Activated CD4-positive, alpha-beta memory T cell treated with anti-CD3 and anti-CD28 coated beads, Interleukin-2, amount 10 ng/mL, durations not matched to agents 7 days and 5 days (primary cell): ENCODE measurements at regions of chr2 and their contacts with region 1.

Region 1: GRCh38 chr2:149587220-149587949 is at the start of gene MMADHC:
- DNase-seq: peak; percentile 95
- H3K4me3 Mint-ChIP-seq: peak within 1 kb of the TSS; percentile 82
- H3K27ac Mint-ChIP-seq: peak within 1 kb of the TSS; percentile 98
- H3K4me1 Mint-ChIP-seq: peaks cover 41% of the 10 kb centered on the region
- H3K27me3 Mint-ChIP-seq: peaks cover 10% of the 10 kb centered on the region
- total RNA-seq, gene MMADHC: 112 to 113 TPM

Region 2: DNA sequence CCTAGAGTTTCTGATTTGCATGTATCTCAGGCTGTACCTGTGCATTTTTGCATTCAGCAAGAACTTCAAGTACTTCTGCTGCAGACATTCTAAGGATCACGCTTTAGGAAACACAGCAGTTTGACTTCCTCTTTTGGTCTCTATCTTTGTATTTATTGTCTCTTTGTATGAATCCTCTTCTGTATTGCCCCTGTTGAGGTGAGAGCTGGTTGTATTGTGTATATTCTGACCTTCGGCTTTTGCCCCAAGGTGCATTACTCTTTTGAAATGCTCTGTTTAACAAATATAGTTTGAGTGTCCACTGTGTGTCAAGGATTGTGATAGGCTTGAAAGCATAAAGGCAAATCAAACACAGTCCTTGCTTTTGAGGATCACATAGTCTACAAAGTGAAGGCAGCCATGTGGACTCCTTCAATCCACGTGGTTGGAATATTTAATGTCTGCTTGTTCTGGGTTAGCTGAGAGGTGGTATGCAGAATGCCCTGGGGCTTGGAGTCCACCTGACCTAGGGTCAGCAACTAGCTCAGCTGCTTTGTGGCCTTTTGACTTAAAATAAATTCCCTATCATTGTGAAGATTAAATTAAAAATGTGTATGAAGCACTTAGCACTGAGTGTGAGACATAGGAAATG is 148.9 kb before region 1 on chr2:
- CTCF ChIA-PET with region 1: no interaction called
- POLR2A ChIA-PET with region 1: no interaction called
- DNase-seq: no peak
- H3K4me3 Mint-ChIP-seq: no peak overlapping the region
- H3K27ac Mint-ChIP-seq: no peak overlapping the region
- H3K4me1 Mint-ChIP-seq: no peaks in the 10 kb centered on the region
- H3K27me3 Mint-ChIP-seq: peaks cover 7% of the 10 kb centered on the region

Region 3: DNA sequence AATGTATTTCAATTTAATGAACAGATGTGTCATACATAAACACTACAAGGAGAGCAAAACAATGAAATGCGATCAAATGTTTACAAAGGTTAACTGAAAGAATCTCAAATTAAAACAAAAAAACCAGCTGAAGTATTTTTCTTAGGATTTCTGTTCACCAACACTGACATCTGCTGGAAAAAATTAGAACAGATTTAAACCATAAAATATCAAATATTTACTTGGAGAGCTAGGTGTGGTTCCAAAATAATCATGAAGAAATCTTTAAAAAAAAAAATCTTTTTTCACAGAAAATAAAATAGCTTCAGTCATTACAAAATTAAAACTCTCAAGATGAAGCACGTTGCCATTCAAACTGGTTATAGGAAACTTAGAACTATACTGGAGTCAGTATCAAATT is 13.6 kb before region 1 on chr2:
- CTCF ChIA-PET with region 1: interaction called, 5 read pairs
- POLR2A ChIA-PET with region 1: interaction called, 13 read pairs
- DNase-seq: no peak
- H3K4me3 Mint-ChIP-seq: no peak overlapping the region
- H3K27ac Mint-ChIP-seq: no peak overlapping the region
- H3K4me1 Mint-ChIP-seq: peaks cover 12% of the 10 kb centered on the region
- H3K27me3 Mint-ChIP-seq: no peaks in the 10 kb centered on the region

Region 4: GRCh38 chr2:149597668-149598326 is 10.4 kb after region 1 on chr2:
- CTCF ChIA-PET with region 1: interaction called, 16 read pairs
- POLR2A ChIA-PET with region 1: interaction called, 11 read pairs
- DNase-seq: peak; percentile 50
- H3K4me3 Mint-ChIP-seq: peak overlapping the region; percentile 1
- H3K27ac Mint-ChIP-seq: no peak overlapping the region
- H3K4me1 Mint-ChIP-seq: peaks cover 24% of the 10 kb centered on the region
- H3K27me3 Mint-ChIP-seq: peaks cover 4% of the 10 kb centered on the region

Region 5: GRCh38 chr2:151261231-151261976 is 1674.0 kb after region 1 on chr2 and contains the start of gene RBM43:
- CTCF ChIA-PET with region 1: no interaction called
- POLR2A ChIA-PET with region 1: interaction called, 12 read pairs
- DNase-seq: peak; percentile 91
- H3K4me3 Mint-ChIP-seq: peak within 1 kb of the TSS; percentile 88
- H3K27ac Mint-ChIP-seq: peak within 1 kb of the TSS; percentile 98
- H3K4me1 Mint-ChIP-seq: peaks cover 28% of the 10 kb centered on the region
- H3K27me3 Mint-ChIP-seq: no peaks in the 10 kb centered on the region
- total RNA-seq, gene RBM43: 8.5 to 8.9 TPM

Region 6: DNA sequence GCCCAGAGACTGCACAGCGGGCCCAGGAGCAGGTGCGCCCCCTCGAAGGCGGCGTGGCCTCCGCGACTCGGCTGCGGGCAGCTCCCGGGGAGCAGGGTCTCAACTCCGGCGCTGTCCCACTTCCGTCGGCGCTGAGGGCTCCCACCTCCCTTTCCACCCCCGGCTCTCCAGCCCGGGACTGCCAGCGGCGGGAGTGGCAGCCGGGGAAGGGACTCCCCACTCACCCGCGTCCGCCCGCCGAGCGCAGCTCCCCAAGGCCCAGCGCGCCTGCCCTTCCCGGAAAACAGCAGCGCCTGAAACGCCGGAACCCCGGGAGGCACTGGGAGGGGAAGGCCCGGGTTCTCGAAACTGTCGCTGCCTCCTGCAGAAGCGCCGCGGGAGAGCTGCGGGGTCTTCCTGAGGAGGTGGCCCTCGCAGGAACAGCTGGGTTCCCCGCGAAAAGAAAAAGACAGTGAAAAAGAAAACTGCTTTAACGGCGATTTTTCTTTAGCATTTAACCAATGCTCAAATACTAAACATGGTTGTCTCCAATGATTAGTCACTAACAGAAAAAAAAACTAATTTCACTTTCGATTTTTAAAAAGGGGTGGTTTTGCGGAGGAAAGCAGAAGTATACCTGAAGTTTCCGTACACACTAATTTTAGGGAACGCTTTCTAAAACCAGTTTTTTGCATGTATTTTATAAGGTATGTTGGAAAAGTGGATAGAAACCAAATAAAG is 1702.1 kb after region 1 on chr2 and contains the start of gene NMI:
- CTCF ChIA-PET with region 1: no interaction called
- POLR2A ChIA-PET with region 1: interaction called, 20 read pairs
- DNase-seq: peak; percentile 76
- H3K4me3 Mint-ChIP-seq: peak within 1 kb of the TSS; percentile 93
- H3K27ac Mint-ChIP-seq: peak within 1 kb of the TSS; percentile 93
- H3K4me1 Mint-ChIP-seq: peaks cover 45% of the 10 kb centered on the region
- H3K27me3 Mint-ChIP-seq: no peaks in the 10 kb centered on the region
- total RNA-seq, gene NMI: 70.5 to 77.0 TPM